HAP-1 (cell line): ENCODE measurements at regions of chr1 and their contacts with region 1.

Region 1: DNA sequence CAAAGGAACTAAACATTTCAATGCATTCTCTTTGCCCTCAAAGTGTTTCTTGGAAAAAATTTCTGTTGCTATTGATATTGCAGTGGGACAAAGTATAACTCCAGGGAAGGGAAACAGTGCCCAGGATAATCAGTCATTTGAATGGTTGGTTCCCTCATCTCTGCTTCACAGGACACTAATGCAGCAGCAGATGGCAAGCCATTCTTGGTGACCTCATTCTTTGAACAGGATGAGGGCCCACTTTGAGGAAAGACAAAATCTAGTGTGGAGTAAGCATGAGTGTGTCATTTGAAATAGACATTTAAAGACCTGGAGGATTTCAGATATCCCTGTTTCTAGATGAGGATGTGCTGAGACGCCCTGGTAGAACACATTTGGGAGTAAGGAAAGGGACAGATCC is 32.3 kb downstream of the CHRM3 start:
- DNase-seq: no peak
- H3K4me3 ChIP-seq: no peak overlapping the region
- H3K4me1 ChIP-seq: no peaks in the 10 kb centered on the region
- H3K27me3 ChIP-seq: no peaks in the 10 kb centered on the region

Region 2: GRCh38 chr1:239218301-239218700 is 200.4 kb before region 1 on chr1:
- in situ Hi-C with region 1: no loop called
- DNase-seq: no peak
- H3K4me3 ChIP-seq: no peak overlapping the region
- H3K4me1 ChIP-seq: no peaks in the 10 kb centered on the region
- H3K27me3 ChIP-seq: no peaks in the 10 kb centered on the region

Region 3: GRCh38 chr1:239493811-239494414 is 75.2 kb after region 1 on chr1:
- in situ Hi-C with region 1: no loop called
- DNase-seq: no peak
- H3K4me3 ChIP-seq: no peak overlapping the region
- H3K4me1 ChIP-seq: no peaks in the 10 kb centered on the region
- H3K27me3 ChIP-seq: no peaks in the 10 kb centered on the region

Region 4: DNA sequence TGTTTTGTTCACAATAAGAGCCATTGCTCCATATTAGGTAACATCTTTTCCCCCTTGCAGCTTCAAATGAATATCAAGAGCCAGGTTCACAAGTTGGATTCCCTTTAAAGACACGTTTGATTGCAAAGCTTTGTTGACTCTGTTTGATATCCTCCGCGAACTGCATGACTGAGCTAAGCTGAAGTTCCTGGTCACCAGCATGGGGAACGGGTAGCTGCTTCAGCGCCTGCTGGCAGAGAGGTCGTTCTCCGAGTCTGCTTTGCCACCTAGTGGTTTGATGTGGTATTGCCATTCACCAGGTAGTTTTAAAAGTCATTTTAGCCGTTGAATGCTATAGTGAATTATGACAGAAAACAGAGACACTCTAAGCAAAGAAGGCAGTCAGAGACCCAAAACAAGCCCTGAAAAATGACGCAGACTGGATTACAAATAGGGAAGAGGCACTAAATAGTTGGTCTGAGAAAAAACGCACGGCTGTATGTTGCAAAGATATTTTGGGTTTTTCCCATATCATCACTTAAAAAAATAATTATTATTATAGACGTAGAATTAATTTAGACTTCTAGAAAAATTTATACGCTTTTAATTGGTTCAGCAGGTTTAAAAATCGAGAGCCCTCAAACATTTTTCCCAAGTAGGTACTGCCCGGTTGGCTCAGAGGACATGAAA is 479.5 kb after region 1 on chr1:
- in situ Hi-C with region 1: loop called (anchors 25 kb)
- DNase-seq: peak; percentile 77 to 87
- H3K4me3 ChIP-seq: no peak overlapping the region
- H3K4me1 ChIP-seq: peaks cover 4% of the 10 kb centered on the region
- H3K27me3 ChIP-seq: no peaks in the 10 kb centered on the region; the same call in 1 of the 2 replicates